PC-3 (cell line): ENCODE measurements at regions of chr9 and their contacts with region 1.

Region 1: GRCh38 chr9:81335879-81336421 is 353.4 kb downstream of the TLE1 start:
- DNase-seq: no peak
- ATAC-seq: no peak
- H3K4me3 ChIP-seq: no peak overlapping the region
- H3K27ac ChIP-seq: no peak overlapping the region
- H3K4me1 ChIP-seq: no peaks in the 10 kb centered on the region; the same call in 1 of the 2 replicates
- H3K27me3 ChIP-seq: no peaks in the 10 kb centered on the region
- CTCF ChIP-seq: no peak

Region 2: GRCh38 chr9:81182431-81182830 is 153.5 kb before region 1 on chr9:
- CTCF ChIA-PET with region 1: no interaction called
- POLR2A ChIA-PET with region 1: no interaction called
- intact Hi-C with region 1: loop called (anchors 5 kb)
- DNase-seq: peak; percentile 51
- ATAC-seq: peak; percentile 79
- H3K4me3 ChIP-seq: no peak overlapping the region
- H3K27ac ChIP-seq: no peak overlapping the region
- H3K4me1 ChIP-seq: peaks cover 9% of the 10 kb centered on the region; the same call in 1 of the 2 replicates
- H3K27me3 ChIP-seq: no peaks in the 10 kb centered on the region
- CTCF ChIP-seq: no peak

Region 3: GRCh38 chr9:81389569-81389993 is 53.6 kb after region 1 on chr9:
- CTCF ChIA-PET with region 1: no interaction called
- POLR2A ChIA-PET with region 1: no interaction called
- intact Hi-C with region 1: loop called (anchors 1 kb)
- DNase-seq: peak; percentile 95
- ATAC-seq: peak; percentile 95
- H3K4me3 ChIP-seq: no peak overlapping the region
- H3K27ac ChIP-seq: peak overlapping the region; percentile 72
- H3K4me1 ChIP-seq: peaks cover 34% of the 10 kb centered on the region
- H3K27me3 ChIP-seq: no peaks in the 10 kb centered on the region
- CTCF ChIP-seq: no peak